ENCODE measurements at regions of chr7 and their contacts with region 1.

Region 1: GRCh38 chr7:102464577-102465280 is at the starts of genes ALKBH4 and LRWD1:
- DNase-seq: peak; percentile 88
- ATAC-seq: peak; percentile 90
- H3K4me3 ChIP-seq: peak within 1 kb of the TSS; percentile 90
- H3K27ac ChIP-seq: no peak within 1 kb of the TSS
- H3K4me1 ChIP-seq: peaks cover 10% of the 10 kb centered on the region; the same call in 1 of the 2 replicates
- H3K27me3 ChIP-seq: no peaks in the 10 kb centered on the region
- CTCF ChIP-seq: 0 out of 2 replicates have a peak, but pooled peaks have one; percentile 15
- total RNA-seq, gene ALKBH4: 21.3 and 31.0 TPM in 2 replicates
- total RNA-seq, gene LRWD1: 41.8 and 69.5 TPM in 2 replicates

Region 2: DNA sequence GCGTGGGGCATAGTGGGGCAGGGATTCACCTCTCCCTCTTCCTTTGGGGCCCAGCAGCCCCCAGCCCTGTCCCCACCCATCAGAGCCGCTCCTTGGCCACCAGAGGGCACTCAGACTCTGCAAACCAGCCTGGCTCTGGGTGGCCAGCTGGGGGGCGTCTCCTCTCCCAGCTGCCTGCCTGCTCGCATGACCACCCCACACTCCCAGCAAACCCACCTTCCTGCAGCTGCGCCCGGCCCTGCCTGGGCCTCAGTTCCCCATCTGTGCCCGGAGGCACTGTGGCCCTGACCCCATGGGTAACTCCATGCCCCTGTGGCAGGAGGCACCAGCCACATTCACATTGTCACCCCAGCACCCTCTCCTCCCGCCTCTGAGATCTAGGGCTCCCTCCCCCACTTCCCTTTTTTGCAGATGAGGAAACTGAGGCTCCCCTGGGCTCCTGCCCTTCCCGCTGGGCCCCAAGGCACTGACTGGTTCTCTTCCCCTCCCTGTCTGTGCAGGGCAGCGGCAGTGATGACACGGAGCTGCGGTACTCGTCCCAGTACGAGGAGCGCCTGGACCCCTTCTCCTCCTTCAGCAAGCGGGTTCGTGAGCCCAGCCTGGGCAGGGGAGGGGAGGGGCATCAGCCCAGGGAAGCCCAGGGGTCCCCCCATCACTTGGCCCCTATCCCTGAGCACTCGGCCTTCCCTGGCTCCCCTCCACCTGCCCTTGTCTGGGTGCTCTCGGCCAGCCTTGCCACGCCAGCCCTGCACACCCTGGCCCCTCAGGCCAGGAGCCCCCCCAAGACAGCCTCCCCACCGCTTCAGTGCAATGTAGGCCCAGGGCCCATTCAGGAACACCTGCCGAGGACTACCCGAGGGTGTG is 185.0 kb before region 1 on chr7:
- CTCF ChIA-PET with region 1: interaction called, 13 read pairs
- POLR2A ChIA-PET with region 1: no interaction called
- intact Hi-C with region 1: no loop called
- DNase-seq: peak; percentile 56
- ATAC-seq: peak; percentile 94
- H3K4me3 ChIP-seq: no peak overlapping the region
- H3K27ac ChIP-seq: no peak overlapping the region
- H3K4me1 ChIP-seq: no peaks in the 10 kb centered on the region
- H3K27me3 ChIP-seq: no peaks in the 10 kb centered on the region
- CTCF ChIP-seq: peak; percentile 90

Region 3: DNA sequence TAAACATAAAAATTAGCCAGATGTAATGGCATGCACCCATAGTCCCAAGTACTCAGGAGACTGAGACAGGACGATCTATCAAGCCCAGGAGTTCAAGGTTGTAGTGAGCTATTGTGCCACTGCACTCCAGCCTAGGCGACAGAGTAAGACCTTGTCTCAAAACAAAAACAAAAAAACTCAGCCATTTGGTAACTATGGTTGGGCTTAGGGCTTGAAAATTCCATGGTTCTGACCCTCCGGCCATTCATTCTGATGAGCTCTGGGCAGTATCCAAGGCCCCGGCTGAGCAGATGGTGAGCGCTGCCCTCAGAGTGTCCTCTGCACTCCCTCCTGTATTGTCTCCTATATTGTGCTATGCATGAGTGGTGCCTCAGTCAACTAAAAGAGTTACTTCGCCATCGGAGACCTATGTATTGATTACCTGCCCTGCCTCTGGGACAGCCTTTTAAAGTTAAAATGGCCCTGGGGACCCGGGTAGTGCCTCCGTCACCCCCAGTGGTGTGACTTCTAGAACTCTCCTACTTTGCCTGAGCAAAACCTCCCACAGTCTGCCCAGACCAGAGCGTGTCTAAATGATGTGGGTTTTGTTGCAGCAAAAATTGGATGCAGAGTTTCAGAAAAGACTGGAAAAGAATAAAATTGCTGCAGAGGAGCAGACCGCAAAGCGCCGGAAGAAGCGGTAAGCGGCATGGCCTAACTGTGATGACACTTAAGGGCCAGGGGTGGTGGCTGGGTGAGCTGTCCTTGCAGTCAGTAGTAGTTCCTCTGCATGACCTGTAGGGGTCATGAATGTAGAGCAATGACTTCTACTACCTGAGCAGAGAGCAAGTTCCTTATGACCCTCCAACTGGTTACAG is 60.5 kb before region 1 on chr7:
- CTCF ChIA-PET with region 1: interaction called, 3 read pairs
- POLR2A ChIA-PET with region 1: interaction called, 5 read pairs
- intact Hi-C with region 1: loop called (anchors 2 kb)
- DNase-seq: peak; percentile 59
- ATAC-seq: peak; percentile 98
- H3K4me3 ChIP-seq: no peak overlapping the region
- H3K27ac ChIP-seq: no peak overlapping the region
- H3K4me1 ChIP-seq: no peaks in the 10 kb centered on the region
- H3K27me3 ChIP-seq: no peaks in the 10 kb centered on the region
- CTCF ChIP-seq: peak; percentile 57

Measured in PC-3 (cell line).